ENCODE measurements at regions of chr15 and their contacts with region 1.

Region 1: DNA sequence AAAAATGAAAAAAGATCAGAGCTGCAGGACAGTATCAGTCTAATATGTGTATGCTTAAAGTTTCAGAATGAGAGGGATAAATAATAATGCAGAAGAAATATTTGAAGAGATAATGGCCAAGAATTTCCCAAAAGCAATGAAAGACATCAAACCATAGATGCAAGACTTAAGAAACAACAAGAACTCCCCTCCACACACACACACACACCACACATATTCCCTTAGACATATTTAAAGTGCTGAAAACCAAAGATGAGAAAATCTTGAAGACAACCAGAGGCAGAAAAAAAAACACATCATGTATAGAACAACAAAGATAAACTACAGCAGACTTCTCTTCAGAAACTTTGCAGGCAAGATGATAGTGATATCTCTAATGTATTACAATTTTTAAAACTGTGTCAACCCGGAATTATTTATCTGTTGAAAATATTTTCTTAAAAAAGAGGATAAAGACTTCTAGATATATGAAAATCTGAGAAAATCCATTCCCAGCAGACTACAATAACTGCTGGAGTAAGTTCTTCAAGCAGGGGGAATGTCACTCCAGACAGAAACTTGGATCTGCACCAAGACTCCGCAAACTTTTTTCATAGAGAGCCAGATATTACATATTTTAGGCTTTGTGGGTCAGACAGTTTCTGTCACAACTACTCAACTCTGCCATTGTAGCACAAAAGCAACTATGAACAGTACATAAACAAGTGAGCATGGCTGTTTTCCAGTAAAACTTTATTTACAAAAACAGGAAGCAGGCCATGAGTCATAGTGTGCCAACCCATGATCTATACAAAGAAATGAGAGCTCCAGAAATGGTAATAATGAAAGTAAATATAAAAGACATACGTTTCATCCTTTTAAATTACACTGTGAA is 223.4 kb upstream of the CGNL1 start:
- DNase-seq: peak; percentile 77
- H3K4me3 ChIP-seq: no peak overlapping the region
- H3K27ac ChIP-seq: peak overlapping the region; percentile 93
- H3K4me1 ChIP-seq: peaks cover 69% of the 10 kb centered on the region
- H3K27me3 ChIP-seq: no peaks in the 10 kb centered on the region
- CTCF ChIP-seq: no peak

Region 2: DNA sequence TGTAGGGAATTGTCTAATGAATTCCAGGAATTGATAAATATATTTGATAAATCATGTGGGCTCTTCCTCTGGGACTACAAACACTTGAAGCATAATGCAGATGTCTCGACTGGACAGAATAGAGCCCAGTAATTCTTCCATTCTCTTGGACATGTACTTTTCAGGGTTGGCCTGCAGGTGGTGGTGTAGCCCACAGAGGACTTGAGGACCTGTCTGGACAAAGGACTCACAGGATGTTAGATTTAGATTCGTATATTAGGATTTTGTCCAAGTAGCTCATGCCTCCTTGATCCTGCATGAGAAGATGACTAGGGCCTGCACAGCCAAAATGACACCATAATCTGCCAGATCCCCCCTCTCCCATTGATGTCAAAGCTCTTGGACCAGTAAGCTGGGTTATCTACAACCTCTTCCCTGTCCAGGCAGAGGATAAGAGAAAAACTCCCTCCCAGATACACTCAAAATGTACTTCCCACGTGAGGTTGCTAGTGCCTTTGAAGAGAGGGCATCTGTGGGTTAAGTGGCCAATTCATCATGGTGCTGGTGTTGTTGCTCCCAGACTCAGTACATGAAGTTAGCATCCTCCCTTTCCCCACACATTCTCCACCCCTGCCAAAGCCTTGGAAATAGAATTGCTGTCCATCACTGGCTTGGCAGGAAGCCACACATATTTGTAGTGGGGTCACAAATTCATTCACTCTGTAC is 331.0 kb before region 1 on chr15:
- CTCF ChIA-PET with region 1: no interaction called
- POLR2A ChIA-PET with region 1: no interaction called
- intact Hi-C with region 1: loop called (anchors 5 kb)
- DNase-seq: peak; percentile 77
- H3K4me3 ChIP-seq: no peak overlapping the region
- H3K27ac ChIP-seq: no peak overlapping the region
- H3K4me1 ChIP-seq: peaks cover 39% of the 10 kb centered on the region
- H3K27me3 ChIP-seq: no peaks in the 10 kb centered on the region
- CTCF ChIP-seq: peak; percentile 73

Region 3: GRCh38 chr15:57205996-57206395 is 53.1 kb after region 1 on chr15:
- CTCF ChIA-PET with region 1: no interaction called
- POLR2A ChIA-PET with region 1: interaction called, 21 read pairs
- intact Hi-C with region 1: no loop called
- DNase-seq: peak; percentile 88
- H3K4me3 ChIP-seq: no peak overlapping the region
- H3K27ac ChIP-seq: peak overlapping the region; percentile 44
- H3K4me1 ChIP-seq: peaks cover 52% of the 10 kb centered on the region
- H3K27me3 ChIP-seq: no peaks in the 10 kb centered on the region
- CTCF ChIP-seq: no peak

Region 4: DNA sequence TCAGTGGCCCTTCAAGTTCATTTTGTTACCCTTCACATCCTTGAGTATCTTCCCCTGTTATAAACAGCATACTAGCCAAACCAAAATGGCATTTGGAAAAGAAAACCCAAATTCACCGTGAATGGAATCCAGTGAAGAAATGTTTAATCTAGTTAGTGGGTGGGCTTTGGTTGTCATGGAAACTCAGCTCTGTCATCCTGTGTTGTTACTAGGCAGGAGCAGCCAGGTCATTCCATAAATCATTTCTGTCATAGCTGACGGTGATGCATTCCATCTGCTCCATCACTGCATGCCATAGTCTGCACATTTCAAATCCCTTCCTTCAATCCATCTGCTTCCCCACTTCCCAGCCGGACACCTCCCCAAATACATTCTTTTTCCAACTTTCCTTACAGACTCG is 83.0 kb after region 1 on chr15:
- CTCF ChIA-PET with region 1: no interaction called
- POLR2A ChIA-PET with region 1: interaction called, 13 read pairs
- intact Hi-C with region 1: no loop called
- DNase-seq: peak; percentile 86
- H3K4me3 ChIP-seq: peak overlapping the region; percentile 11
- H3K27ac ChIP-seq: peak overlapping the region; percentile 55
- H3K4me1 ChIP-seq: peaks cover 66% of the 10 kb centered on the region
- H3K27me3 ChIP-seq: no peaks in the 10 kb centered on the region
- CTCF ChIP-seq: no peak

Region 5: GRCh38 chr15:57324590-57324890 is 171.6 kb after region 1 on chr15:
- CTCF ChIA-PET with region 1: no interaction called
- POLR2A ChIA-PET with region 1: no interaction called
- intact Hi-C with region 1: no loop called
- DNase-seq: no peak
- H3K4me3 ChIP-seq: no peak overlapping the region
- H3K27ac ChIP-seq: no peak overlapping the region
- H3K4me1 ChIP-seq: peaks cover 35% of the 10 kb centered on the region
- H3K27me3 ChIP-seq: no peaks in the 10 kb centered on the region
- CTCF ChIP-seq: no peak

Region 6: DNA sequence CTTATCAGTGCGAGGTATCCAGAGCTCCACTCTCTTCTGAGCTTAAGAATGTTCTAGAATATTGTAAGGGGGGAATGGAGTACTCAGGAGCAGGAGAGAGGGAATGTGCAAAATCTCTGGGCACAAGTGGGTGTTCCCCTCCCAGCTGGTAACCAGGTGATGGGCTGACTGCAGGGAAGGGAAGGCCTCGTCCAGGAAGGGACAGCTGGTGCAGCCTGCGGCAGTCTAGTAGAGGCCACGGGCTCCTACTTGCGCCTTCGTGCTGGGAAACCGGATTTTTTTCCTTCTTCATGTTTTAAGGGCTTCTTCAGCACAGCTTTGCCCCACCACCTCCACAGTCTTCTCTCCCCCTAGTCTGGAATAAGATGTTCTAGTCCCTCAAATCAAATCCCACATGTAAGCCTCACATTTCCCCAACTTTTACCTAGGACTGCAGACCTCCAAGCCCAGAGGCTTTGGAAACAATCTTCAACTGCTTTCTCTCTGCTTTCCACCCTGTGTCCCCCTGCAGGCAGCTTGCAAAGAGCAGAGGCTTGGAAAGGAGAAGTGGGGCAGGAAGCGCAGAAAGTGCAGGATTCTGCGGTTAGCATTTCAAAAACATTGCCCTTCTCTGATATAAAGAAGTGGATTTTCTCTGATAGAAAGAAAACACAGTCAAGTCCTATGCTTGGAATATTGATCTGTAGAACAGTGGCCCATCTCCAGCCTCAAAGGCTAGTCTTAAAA is 211.5 kb after region 1 on chr15:
- CTCF ChIA-PET with region 1: no interaction called
- POLR2A ChIA-PET with region 1: no interaction called
- intact Hi-C with region 1: no loop called
- DNase-seq: peak; percentile 26
- H3K4me3 ChIP-seq: no peak overlapping the region
- H3K27ac ChIP-seq: no peak overlapping the region
- H3K4me1 ChIP-seq: no peaks in the 10 kb centered on the region
- H3K27me3 ChIP-seq: no peaks in the 10 kb centered on the region
- CTCF ChIP-seq: 0 out of 2 replicates have a peak, but pooled peaks have one; percentile 33

Region 7: GRCh38 chr15:57382215-57382614 is 229.3 kb after region 1 on chr15:
- CTCF ChIA-PET with region 1: no interaction called
- POLR2A ChIA-PET with region 1: no interaction called
- intact Hi-C with region 1: no loop called
- DNase-seq: no peak
- H3K4me3 ChIP-seq: no peak overlapping the region
- H3K27ac ChIP-seq: no peak overlapping the region
- H3K4me1 ChIP-seq: no peaks in the 10 kb centered on the region
- H3K27me3 ChIP-seq: no peaks in the 10 kb centered on the region
- CTCF ChIP-seq: no peak